Heart left ventricle (tissue), 16 donors: ENCODE measurements at regions of chr5 and their contacts with region 1.

Region 1: DNA sequence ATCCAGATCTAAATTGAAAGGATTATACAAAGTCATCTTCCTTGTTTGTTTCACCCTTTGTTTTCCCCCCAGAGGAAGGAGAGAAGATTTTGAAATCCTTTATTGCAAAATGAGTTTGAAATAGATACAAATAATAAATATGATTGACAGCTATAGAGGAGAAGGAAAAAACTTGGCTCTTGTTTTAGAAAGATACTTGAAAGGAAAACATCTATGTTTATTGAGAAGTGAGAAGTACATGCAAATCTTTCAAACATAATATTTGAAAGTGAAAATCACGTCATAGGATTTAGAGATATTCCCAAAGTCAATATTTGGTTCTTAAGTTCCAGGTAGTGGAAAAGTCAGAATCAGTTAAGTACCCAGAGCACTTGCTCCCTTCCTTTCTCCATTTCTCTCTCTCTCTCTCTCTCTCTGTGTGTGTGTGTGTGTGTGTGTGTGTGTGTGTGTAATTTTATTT is 27.2 kb downstream of the PAM start:
- DNase-seq: no peak
- ATAC-seq: no peak
- H3K4me3 ChIP-seq: no peak overlapping the region
- H3K27ac ChIP-seq: peak overlapping the region in 11 of 12 donors; percentile 7 to 74 (median 38)
- H3K4me1 ChIP-seq: peaks cover 0 to 48% (median 32%) of the 10 kb centered on the region in 12 donors
- H3K27me3 ChIP-seq: no peaks in the 10 kb centered on the region
- CTCF ChIP-seq: no peak
- POLR2A ChIP-seq: no peak

Region 2: GRCh38 chr5:102570748-102571147 is 211.6 kb before region 1 on chr5:
- intact Hi-C with region 1: no loop called
- DNase-seq: no peak
- ATAC-seq: no peak
- H3K4me3 ChIP-seq: no peak overlapping the region
- H3K27ac ChIP-seq: no peak overlapping the region
- H3K4me1 ChIP-seq: no peaks in the 10 kb centered on the region
- H3K27me3 ChIP-seq: no peaks in the 10 kb centered on the region
- CTCF ChIP-seq: no peak
- POLR2A ChIP-seq: no peak

Region 3: DNA sequence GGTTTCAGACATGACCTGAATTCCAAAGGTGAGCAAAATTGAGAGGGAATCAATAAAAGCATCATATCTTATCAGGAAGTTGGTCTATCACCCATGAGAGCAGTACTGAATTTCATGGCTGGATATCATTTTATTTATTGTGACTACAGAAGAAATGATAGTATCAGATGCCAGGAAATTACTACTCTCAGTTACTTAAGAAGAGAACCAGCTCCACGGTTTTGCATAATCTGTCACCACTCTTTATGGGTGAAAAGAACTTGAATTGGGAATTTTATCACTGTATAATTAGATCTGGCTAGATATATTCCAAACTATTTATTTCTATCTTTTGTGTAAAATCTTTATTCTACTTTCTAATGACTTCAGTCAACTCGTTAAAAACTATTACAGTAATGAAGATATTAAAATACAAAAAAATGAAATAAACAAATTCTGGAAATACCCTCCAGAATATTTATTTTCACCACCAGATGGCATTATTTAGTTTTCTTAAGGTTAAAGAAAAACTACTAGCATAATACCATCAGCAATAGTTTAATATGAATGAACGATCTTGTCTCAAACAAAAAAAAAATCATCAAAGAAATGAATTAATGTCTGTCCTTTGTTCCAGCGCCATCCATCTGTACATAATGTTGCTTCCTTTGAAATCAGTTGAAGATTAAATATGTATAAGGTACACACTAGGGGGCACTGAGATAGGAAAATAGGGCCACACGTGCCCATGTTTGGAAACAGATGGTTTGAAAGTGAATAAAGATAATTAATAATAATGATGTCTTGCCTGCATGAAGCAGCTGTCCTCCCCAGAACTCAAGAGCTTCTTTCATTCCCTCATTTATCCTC is 198.8 kb before region 1 on chr5:
- intact Hi-C with region 1: loop called in 1 of 10 experiments (anchors 10 kb)
- DNase-seq: no peak
- ATAC-seq: no peak
- H3K4me3 ChIP-seq: no peak overlapping the region
- H3K27ac ChIP-seq: no peak overlapping the region
- H3K4me1 ChIP-seq: no peaks in the 10 kb centered on the region
- H3K27me3 ChIP-seq: no peaks in the 10 kb centered on the region
- CTCF ChIP-seq: peak; percentile 29 to 62 (median 50)
- POLR2A ChIP-seq: no peak

Region 4: GRCh38 chr5:102722930-102723329 is 59.4 kb before region 1 on chr5:
- intact Hi-C with region 1: no loop called
- DNase-seq: no peak
- ATAC-seq: no peak
- H3K4me3 ChIP-seq: no peak overlapping the region
- H3K27ac ChIP-seq: no peak overlapping the region
- H3K4me1 ChIP-seq: no peaks in the 10 kb centered on the region
- H3K27me3 ChIP-seq: no peaks in the 10 kb centered on the region
- CTCF ChIP-seq: no peak
- POLR2A ChIP-seq: no peak

Region 5: GRCh38 chr5:102911973-102912372 is 129.6 kb after region 1 on chr5:
- intact Hi-C with region 1: no loop called
- DNase-seq: no peak
- ATAC-seq: peak in 3 of 4 donors; percentile 41 to 67 (median 56)
- H3K4me3 ChIP-seq: no peak overlapping the region
- H3K27ac ChIP-seq: peak overlapping the region in 6 of 12 donors; percentile 13 to 40 (median 20)
- H3K4me1 ChIP-seq: peaks cover 0 to 45% (median 26%) of the 10 kb centered on the region in 12 donors
- H3K27me3 ChIP-seq: no peaks in the 10 kb centered on the region
- CTCF ChIP-seq: no peak
- POLR2A ChIP-seq: no peak

Region 6: DNA sequence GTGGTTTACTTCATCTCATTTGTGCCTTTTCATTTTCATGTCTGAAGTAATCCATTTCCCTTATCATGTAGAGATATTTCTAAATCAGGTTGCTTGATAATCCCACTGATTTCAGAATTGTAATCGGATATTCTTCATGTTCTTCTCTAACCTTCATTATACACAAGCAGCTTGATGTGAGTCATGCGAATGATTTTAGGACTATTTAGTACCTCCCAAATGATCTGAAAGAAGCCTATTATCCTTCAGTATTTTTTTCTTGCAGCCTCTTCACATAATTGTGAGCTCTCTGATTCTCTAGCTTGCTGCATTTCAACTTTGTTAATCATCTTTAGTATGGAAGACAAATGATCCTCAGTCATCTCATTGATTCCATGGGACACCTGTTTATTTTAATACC is 155.6 kb after region 1 on chr5:
- intact Hi-C with region 1: loop called in 2 of 10 experiments (anchors 10 kb)
- DNase-seq: no peak
- ATAC-seq: no peak
- H3K4me3 ChIP-seq: no peak overlapping the region
- H3K27ac ChIP-seq: peak overlapping the region in 1 of 12 donors; percentile 4
- H3K4me1 ChIP-seq: peaks cover 0 to 30% (median 3%) of the 10 kb centered on the region in 12 donors
- H3K27me3 ChIP-seq: no peaks in the 10 kb centered on the region
- CTCF ChIP-seq: no peak
- POLR2A ChIP-seq: no peak

Region 7: GRCh38 chr5:102961671-102962070 is 179.3 kb after region 1 on chr5:
- intact Hi-C with region 1: loop called in 2 of 10 experiments (anchors 5 to 10 kb)
- DNase-seq: no peak
- ATAC-seq: no peak
- H3K4me3 ChIP-seq: no peak overlapping the region
- H3K27ac ChIP-seq: no peak overlapping the region
- H3K4me1 ChIP-seq: peaks cover 0 to 18% (median 11%) of the 10 kb centered on the region in 12 donors
- H3K27me3 ChIP-seq: no peaks in the 10 kb centered on the region
- CTCF ChIP-seq: no peak
- POLR2A ChIP-seq: no peak

Region 8: GRCh38 chr5:103041071-103041676 is 258.8 kb after region 1 on chr5:
- intact Hi-C with region 1: loop called in 2 of 10 experiments (anchors 5 to 10 kb)
- DNase-seq: no peak
- ATAC-seq: no peak
- H3K4me3 ChIP-seq: no peak overlapping the region
- H3K27ac ChIP-seq: no peak overlapping the region
- H3K4me1 ChIP-seq: no peaks in the 10 kb centered on the region
- H3K27me3 ChIP-seq: no peaks in the 10 kb centered on the region
- CTCF ChIP-seq: peak; percentile 41 to 81 (median 62)
- POLR2A ChIP-seq: no peak